HEK293 (cell line): ENCODE measurements at regions of chr2 and their contacts with region 1.

Region 1: GRCh38 chr2:218659258-218659987 is at the starts of genes BCS1L and ZNF142:
- H3K4me3 ChIP-seq: peak within 1 kb of the TSS; percentile 85
- H3K27ac ChIP-seq: peak within 1 kb of the TSS; percentile 76
- H3K4me1 ChIP-seq: no peaks in the 10 kb centered on the region
- CTCF ChIP-seq: no peak

Region 2: GRCh38 chr2:218648088-218648786 is 11.2 kb before region 1 on chr2:
- CTCF ChIA-PET with region 1: interaction called, 16 read pairs
- POLR2A ChIA-PET with region 1: interaction called, 8 read pairs
- H3K4me3 ChIP-seq: no peak overlapping the region
- H3K27ac ChIP-seq: no peak overlapping the region
- H3K4me1 ChIP-seq: no peaks in the 10 kb centered on the region
- CTCF ChIP-seq: peak; percentile 77

Region 3: DNA sequence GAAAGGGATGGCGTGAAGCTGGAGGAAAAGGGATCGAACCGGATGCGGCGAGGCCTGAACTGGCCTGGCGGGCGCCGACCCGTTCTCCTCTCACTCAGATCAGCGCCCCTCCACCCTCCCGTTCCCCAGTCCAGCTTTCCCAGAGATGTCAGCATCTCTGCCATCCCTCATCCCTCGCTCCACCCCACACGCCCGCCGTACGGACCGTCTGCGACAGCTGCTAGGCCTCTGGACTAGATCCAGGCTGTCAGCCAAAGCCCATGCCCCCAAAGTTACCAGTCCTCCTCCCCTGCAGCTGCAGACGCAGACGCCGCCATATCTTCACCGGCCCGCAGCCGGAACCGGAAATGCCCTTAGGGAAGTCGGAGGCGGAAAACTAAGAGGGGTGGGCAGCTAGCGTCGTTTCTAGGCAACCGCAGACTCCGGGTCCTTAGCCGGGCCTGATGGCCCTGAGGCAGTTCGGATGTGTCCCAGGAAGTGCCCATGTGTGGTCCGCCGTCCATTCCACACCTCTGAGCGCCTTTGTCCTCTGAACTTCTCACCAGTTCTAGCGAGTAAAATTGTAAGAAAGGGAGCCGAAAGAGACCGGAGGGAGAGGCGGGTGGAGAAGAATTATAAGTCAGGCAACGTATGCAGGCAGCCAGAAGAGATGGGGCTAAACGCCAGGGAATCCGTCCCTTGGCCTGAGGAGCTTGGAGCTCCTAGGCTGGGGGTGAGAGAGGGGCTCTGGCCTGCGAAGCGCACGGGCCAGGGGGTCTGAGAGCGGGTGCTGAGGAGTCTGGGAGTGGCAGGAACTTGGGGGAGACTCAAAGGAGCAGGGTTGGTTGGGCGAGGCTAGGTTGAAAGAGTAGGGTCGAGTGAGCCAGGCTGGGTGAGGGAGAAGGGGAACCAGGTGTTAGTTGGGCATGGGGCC is 12.5 kb after region 1 on chr2 and contains the starts of genes RNF25 and STK36:
- CTCF ChIA-PET with region 1: interaction called, 19 read pairs
- POLR2A ChIA-PET with region 1: interaction called, 62 read pairs
- H3K4me3 ChIP-seq: peak within 1 kb of the TSS; percentile 94
- H3K27ac ChIP-seq: peak within 1 kb of the TSS; percentile 54
- H3K4me1 ChIP-seq: no peaks in the 10 kb centered on the region
- CTCF ChIP-seq: peak; percentile 38; the same call in 1 of the 2 replicates